Naive thymus-derived CD4-positive, alpha-beta T cell (primary cell): ENCODE measurements at regions of chr5 and their contacts with region 1.

Region 1: DNA sequence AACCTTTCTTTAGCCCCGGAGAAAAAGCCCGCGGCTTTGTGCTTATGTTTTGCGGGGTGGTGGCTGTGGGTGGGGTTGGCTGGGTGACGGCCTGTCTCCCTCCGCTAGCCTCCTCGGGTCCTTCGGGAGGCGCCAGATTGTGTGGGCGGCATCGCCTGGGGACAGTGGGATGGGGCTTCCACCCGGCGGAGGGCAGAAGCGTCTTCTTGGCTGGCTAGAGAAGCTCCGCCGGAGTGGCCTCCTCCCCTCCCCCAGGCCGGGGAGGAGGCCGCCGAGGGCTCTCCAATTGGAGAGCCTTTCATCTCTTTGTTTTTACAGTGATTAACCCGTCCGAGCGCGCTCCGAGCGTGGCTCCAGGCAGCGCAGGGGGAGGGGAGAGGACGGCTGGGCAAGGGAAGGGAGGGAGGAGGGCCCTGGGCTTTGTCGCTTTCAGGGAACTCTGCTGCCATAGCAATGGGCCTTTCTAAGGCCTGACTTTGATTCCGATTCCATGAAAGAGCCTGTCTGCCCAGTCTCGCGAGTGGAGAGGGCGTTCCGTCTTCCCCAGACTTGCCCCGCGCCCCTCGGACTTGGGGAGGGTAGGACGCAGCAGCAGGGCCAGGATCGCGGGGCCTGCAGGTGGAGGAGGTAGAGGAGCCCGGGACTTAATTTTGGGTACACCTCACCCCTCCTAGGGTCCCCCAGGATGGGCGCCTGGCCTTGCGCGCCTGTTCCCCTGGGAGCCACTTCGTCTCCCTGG is 36.7 kb upstream of the TIFAB start:
- DNase-seq: no peak
- ATAC-seq: no peak
- H3K4me3 ChIP-seq: no peak overlapping the region
- H3K4me3 Mint-ChIP-seq: peak overlapping the region in 2 of 10 donors; percentile 20 to 67
- H3K27ac ChIP-seq: no peak overlapping the region
- H3K27ac Mint-ChIP-seq: no peak overlapping the region
- H3K4me1 ChIP-seq: no peaks in the 10 kb centered on the region
- H3K4me1 Mint-ChIP-seq: peaks cover 2 to 18% (median 8%) of the 10 kb centered on the region in 7 donors
- H3K27me3 ChIP-seq: no peaks in the 10 kb centered on the region
- H3K27me3 Mint-ChIP-seq: peaks cover 62 to 89% (median 74%) of the 10 kb centered on the region in 5 donors

Region 2: GRCh38 chr5:135039271-135040045 is 449.4 kb before region 1 on chr5:
- CTCF ChIA-PET with region 1: no interaction called
- POLR2A ChIA-PET with region 1: no interaction called
- intact Hi-C with region 1: loop called in 1 of 2 experiments (anchors 5 kb)
- DNase-seq: no peak
- ATAC-seq: peak; percentile 21
- H3K4me3 ChIP-seq: no peak overlapping the region
- H3K4me3 Mint-ChIP-seq: peak overlapping the region in 5 of 10 donors; percentile 38 to 76 (median 45)
- H3K27ac ChIP-seq: no peak overlapping the region
- H3K27ac Mint-ChIP-seq: no peak overlapping the region
- H3K4me1 ChIP-seq: no peaks in the 10 kb centered on the region
- H3K4me1 Mint-ChIP-seq: peaks cover 6 to 27% (median 15%) of the 10 kb centered on the region in 7 donors
- H3K27me3 ChIP-seq: peaks cover 7 to 22% of the 10 kb centered on the region in 2 donors
- H3K27me3 Mint-ChIP-seq: peaks cover 72 to 90% (median 75%) of the 10 kb centered on the region in 5 donors

Region 3: GRCh38 chr5:135466178-135467050 is 22.5 kb before region 1 on chr5:
- CTCF ChIA-PET with region 1: no interaction called
- POLR2A ChIA-PET with region 1: no interaction called
- intact Hi-C with region 1: no loop called
- DNase-seq: peak; percentile 36 to 80 (median 58)
- ATAC-seq: peak; percentile 82
- H3K4me3 ChIP-seq: peak overlapping the region; percentile 39
- H3K4me3 Mint-ChIP-seq: peak overlapping the region; percentile 5 to 83 (median 68)
- H3K27ac ChIP-seq: no peak overlapping the region
- H3K27ac Mint-ChIP-seq: peak overlapping the region in 2 of 9 donors; percentile 59 to 68
- H3K4me1 ChIP-seq: peaks cover 0 to 5% of the 10 kb centered on the region in 2 donors
- H3K4me1 Mint-ChIP-seq: peaks cover 6 to 15% (median 10%) of the 10 kb centered on the region in 7 donors
- H3K27me3 ChIP-seq: no peaks in the 10 kb centered on the region
- H3K27me3 Mint-ChIP-seq: peaks cover 23 to 52% (median 37%) of the 10 kb centered on the region in 5 donors

Region 4: DNA sequence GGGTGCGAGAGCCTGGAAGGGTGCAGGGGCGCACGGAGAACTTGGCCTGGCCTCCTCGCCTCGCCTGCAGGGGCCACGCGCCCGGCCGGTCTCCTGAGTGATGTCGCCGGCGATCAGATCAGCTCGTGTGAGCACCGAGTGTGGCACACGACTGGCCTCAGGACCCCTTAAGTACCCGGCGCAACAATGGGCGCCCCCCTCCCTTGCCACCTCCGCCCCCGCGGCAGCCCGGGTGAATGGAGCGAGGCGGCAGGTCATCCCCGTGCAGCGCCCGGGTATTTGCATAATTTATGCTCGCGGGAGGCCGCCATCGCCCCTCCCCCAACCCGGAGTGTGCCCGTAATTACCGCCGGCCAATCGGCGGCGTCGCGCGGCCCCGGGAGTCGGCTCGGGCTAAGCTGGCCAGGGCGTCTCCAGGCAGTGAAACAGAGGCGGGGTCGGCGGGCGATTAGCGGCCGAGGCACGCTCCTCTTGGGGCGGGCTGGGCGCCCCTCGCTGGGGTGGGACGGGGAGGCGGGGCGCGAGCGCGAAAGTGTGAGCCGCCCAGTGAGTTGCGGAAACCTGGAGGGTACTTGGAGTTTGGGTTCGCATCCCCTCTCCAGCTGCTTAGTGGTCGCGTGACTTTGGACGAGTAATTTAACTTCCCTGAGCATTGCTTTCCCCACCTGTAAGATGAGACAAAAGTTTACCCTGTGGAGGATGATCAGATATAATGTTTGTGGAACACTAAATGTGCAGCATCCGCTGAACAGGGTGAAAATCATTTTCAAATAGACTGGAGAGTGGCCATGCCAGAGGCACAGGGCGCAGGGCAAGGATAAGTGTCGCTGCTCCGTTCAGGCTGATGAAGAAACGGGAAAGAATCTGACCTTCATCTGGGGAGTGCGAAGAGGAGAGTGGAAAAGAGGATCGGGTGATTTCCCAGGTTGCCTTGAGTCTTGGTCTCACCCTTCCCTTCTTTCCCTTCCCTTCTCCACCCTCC is 47.2 kb after region 1 on chr5 and contains the start of gene NEUROG1:
- CTCF ChIA-PET with region 1: no interaction called
- POLR2A ChIA-PET with region 1: no interaction called
- intact Hi-C with region 1: loop called in 1 of 2 experiments (anchors 2 kb)
- DNase-seq: no peak
- ATAC-seq: no peak
- H3K4me3 ChIP-seq: no peak within 1 kb of the TSS
- H3K4me3 Mint-ChIP-seq: peak within 1 kb of the TSS in 5 of 10 donors; percentile 42 to 74 (median 59)
- H3K27ac ChIP-seq: no peak within 1 kb of the TSS
- H3K27ac Mint-ChIP-seq: peak within 1 kb of the TSS in 1 of 9 donors; percentile 52
- H3K4me1 ChIP-seq: no peaks in the 10 kb centered on the region
- H3K4me1 Mint-ChIP-seq: peaks cover 2 to 14% (median 8%) of the 10 kb centered on the region in 7 donors
- H3K27me3 ChIP-seq: peaks cover 0 to 7% of the 10 kb centered on the region in 2 donors
- H3K27me3 Mint-ChIP-seq: peaks cover 81 to 91% (median 85%) of the 10 kb centered on the region in 5 donors
- total RNA-seq, gene NEUROG1: not detected

Region 5: GRCh38 chr5:135543485-135544304 is 54.8 kb after region 1 on chr5:
- CTCF ChIA-PET with region 1: no interaction called
- POLR2A ChIA-PET with region 1: no interaction called
- intact Hi-C with region 1: loop called in 1 of 2 experiments (anchors 2 kb)
- DNase-seq: peak in 1 of 9 donors; percentile 25
- ATAC-seq: no peak
- H3K4me3 ChIP-seq: peak overlapping the region; percentile 60
- H3K4me3 Mint-ChIP-seq: peak overlapping the region; percentile 63 to 87 (median 84)
- H3K27ac ChIP-seq: no peak overlapping the region
- H3K27ac Mint-ChIP-seq: peak overlapping the region in 1 of 9 donors; percentile 52
- H3K4me1 ChIP-seq: peaks cover 0 to 7% of the 10 kb centered on the region in 2 donors
- H3K4me1 Mint-ChIP-seq: peaks cover 7 to 22% (median 11%) of the 10 kb centered on the region in 7 donors
- H3K27me3 ChIP-seq: peaks cover 5 to 20% of the 10 kb centered on the region in 2 donors
- H3K27me3 Mint-ChIP-seq: peaks cover 83 to 93% (median 88%) of the 10 kb centered on the region in 5 donors

Region 6: GRCh38 chr5:135560858-135561257 is 72.0 kb after region 1 on chr5:
- CTCF ChIA-PET with region 1: no interaction called
- POLR2A ChIA-PET with region 1: no interaction called
- intact Hi-C with region 1: no loop called
- DNase-seq: peak; percentile 14 to 56 (median 44)
- ATAC-seq: peak; percentile 84
- H3K4me3 ChIP-seq: no peak overlapping the region
- H3K4me3 Mint-ChIP-seq: peak overlapping the region in 1 of 10 donors; percentile 15
- H3K27ac ChIP-seq: no peak overlapping the region
- H3K27ac Mint-ChIP-seq: no peak overlapping the region
- H3K4me1 ChIP-seq: no peaks in the 10 kb centered on the region
- H3K4me1 Mint-ChIP-seq: peaks cover 0 to 9% (median 7%) of the 10 kb centered on the region in 7 donors
- H3K27me3 ChIP-seq: no peaks in the 10 kb centered on the region
- H3K27me3 Mint-ChIP-seq: peaks cover 25 to 40% (median 36%) of the 10 kb centered on the region in 5 donors